Endothelial cell of umbilical vein (primary cell): ENCODE measurements at regions of chr9 and their contacts with region 1.

Region 1: GRCh38 chr9:77977210-77977611 is 54.4 kb downstream of the GNAQ start:
- DNase-seq: peak; percentile 94
- H3K4me3 ChIP-seq: peak overlapping the region in 1 of 3 experiments; percentile 23
- H3K27ac ChIP-seq: peak overlapping the region; percentile 44
- H3K4me1 ChIP-seq: peaks cover 40% of the 10 kb centered on the region
- H3K27me3 ChIP-seq: no peaks in the 10 kb centered on the region
- CTCF ChIP-seq: peak; percentile 71 to 76
- POLR2A ChIP-seq: peak; percentile 51

Region 2: GRCh38 chr9:77751341-77752091 is 225.7 kb before region 1 on chr9:
- CTCF ChIA-PET with region 1: interaction called, 12 read pairs
- POLR2A ChIA-PET with region 1: no interaction called
- dilution Hi-C with region 1: no loop called
- intact Hi-C with region 1: no loop called
- DNase-seq: peak; percentile 85
- H3K4me3 ChIP-seq: no peak overlapping the region
- H3K27ac ChIP-seq: peak overlapping the region; percentile 55
- H3K4me1 ChIP-seq: peaks cover 24% of the 10 kb centered on the region
- H3K27me3 ChIP-seq: no peaks in the 10 kb centered on the region
- CTCF ChIP-seq: peak; percentile 40 to 56
- POLR2A ChIP-seq: no peak

Region 3: GRCh38 chr9:77896938-77897667 is 80.1 kb before region 1 on chr9:
- CTCF ChIA-PET with region 1: interaction called, 14 read pairs
- POLR2A ChIA-PET with region 1: no interaction called
- dilution Hi-C with region 1: no loop called
- intact Hi-C with region 1: no loop called
- DNase-seq: peak; percentile 52
- H3K4me3 ChIP-seq: no peak overlapping the region
- H3K27ac ChIP-seq: no peak overlapping the region
- H3K4me1 ChIP-seq: peaks cover 12% of the 10 kb centered on the region
- H3K27me3 ChIP-seq: no peaks in the 10 kb centered on the region
- CTCF ChIP-seq: peak; percentile 18 to 40
- POLR2A ChIP-seq: no peak

Region 4: DNA sequence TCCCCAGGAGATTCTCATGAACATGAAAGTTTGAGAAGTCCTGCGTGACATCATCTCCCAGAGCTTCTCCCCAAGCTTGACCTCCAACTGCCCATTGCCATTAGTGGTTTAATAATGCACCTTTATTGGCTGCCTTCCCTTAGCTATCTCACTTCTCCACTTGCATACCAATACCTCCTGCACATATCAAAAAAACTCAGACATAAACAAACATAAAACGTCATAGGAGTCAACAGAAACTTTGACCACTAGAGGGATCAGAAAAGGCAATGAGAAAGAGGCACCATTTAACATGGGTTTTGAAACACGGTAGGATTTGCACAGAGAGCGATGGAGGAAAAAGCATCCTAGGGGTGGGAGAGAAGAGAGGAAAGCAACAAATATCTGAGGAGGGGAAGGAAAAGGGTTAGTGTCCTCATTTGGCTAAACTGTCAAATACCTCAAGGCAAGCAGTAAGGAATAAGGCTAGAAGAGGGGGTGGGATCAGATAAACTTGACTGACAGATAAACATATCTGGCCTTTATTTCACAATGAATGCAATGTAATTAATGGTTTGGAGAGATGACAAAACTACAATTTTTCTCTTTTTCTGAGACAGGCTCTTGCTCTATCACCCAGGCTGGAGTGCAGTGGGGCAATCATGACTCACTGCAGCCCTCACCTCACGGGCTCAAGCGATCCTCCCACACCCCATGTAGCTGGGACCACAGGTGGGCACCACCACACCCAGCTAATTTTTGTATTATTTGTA is 27.4 kb after region 1 on chr9:
- CTCF ChIA-PET with region 1: interaction called, 29 read pairs
- POLR2A ChIA-PET with region 1: no interaction called
- dilution Hi-C with region 1: no loop called
- intact Hi-C with region 1: no loop called
- DNase-seq: no peak
- H3K4me3 ChIP-seq: no peak overlapping the region
- H3K27ac ChIP-seq: no peak overlapping the region
- H3K4me1 ChIP-seq: peaks cover 32% of the 10 kb centered on the region
- H3K27me3 ChIP-seq: no peaks in the 10 kb centered on the region
- CTCF ChIP-seq: no peak
- POLR2A ChIP-seq: no peak

Region 5: DNA sequence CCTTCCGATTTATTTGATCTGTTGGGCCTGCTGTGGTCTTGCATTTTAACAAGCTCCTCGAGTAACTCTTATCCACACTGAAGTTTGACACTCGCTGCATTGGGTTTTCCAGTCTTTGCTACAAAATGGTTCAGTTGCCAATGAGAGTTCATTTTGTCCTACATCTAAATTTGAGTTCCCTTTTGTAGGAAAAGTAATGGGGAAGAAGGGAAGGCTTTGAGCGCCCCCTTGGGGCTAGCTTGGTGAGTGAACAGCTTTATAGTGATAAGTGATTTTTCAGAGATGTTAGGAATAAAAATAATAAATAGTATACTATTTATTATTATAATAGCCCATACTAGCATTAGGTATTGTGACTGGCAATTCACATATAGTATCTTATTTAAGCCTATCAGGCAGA is 144.3 kb after region 1 on chr9:
- CTCF ChIA-PET with region 1: interaction called, 134 read pairs
- POLR2A ChIA-PET with region 1: no interaction called
- dilution Hi-C with region 1: no loop called
- intact Hi-C with region 1: loop called (anchors 1 kb)
- DNase-seq: peak; percentile 76
- H3K4me3 ChIP-seq: no peak overlapping the region
- H3K27ac ChIP-seq: no peak overlapping the region
- H3K4me1 ChIP-seq: no peaks in the 10 kb centered on the region
- H3K27me3 ChIP-seq: no peaks in the 10 kb centered on the region
- CTCF ChIP-seq: peak; percentile 64 to 65
- POLR2A ChIP-seq: no peak

Region 6: DNA sequence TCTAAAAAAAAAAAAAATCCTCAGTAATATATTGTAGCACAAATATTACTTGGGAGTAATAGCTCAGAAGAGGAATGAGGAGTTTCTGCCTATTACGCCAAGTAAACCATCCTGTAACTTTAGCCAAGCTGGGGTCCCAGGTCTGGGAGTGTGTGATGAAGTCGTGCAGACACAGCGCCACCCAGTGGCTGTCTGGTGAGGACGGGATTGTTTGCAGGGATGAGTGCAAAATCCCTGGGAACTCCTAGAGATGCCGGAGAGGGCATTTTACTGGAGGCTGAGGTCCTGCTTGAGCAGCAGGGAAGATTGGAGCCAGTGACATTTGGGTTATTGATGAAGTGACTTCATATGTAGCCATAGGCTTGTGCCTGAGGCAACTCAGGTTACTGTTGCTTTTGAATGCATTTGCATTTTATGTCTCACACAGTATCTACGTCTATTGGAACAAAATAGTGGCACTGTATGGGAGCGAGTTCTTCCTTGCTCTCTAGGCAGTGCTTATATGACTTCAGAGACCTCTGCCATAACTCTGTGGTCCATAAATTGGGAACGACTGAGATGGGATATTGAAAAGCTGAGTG is 392.5 kb after region 1 on chr9:
- CTCF ChIA-PET with region 1: interaction called, 12 read pairs
- POLR2A ChIA-PET with region 1: no interaction called
- dilution Hi-C with region 1: no loop called
- intact Hi-C with region 1: loop called (anchors 1 kb)
- DNase-seq: peak; percentile 67
- H3K4me3 ChIP-seq: no peak overlapping the region
- H3K27ac ChIP-seq: no peak overlapping the region
- H3K4me1 ChIP-seq: peaks cover 4% of the 10 kb centered on the region
- H3K27me3 ChIP-seq: peaks cover 14% of the 10 kb centered on the region in 2 experiments
- CTCF ChIP-seq: peak; percentile 90
- POLR2A ChIP-seq: no peak